ENCODE measurements at regions of chrX and their contacts with region 1.

Region 1: DNA sequence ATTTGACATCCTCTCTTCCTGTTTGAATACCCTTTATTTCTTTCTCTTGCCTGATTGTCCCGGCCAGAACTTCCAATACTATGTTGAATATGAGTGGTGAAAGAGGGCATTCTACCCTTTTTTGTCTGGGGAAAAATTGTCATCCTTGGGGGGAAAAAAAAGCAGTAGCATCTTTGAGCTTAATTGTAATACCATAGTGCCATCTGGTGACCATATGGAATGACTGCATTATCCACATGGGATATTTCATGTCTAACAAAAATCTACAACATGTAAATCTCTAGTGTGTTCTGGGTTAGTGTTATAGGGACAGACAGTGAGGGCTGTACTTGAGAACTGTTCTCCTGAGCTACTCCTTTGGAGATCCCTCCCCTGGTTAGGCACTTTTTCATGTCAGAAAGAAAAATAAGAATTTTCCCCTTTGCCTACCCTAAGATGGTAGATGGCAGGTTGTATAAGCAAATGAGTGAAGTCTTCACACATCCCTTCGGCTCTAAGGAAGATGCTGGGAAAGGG is 26.0 kb downstream of the CAPN6 start:
- DNase-seq: no peak
- H3K4me3 Mint-ChIP-seq: no peak overlapping the region
- H3K27ac Mint-ChIP-seq: no peak overlapping the region
- H3K4me1 Mint-ChIP-seq: no peaks in the 10 kb centered on the region
- H3K27me3 Mint-ChIP-seq: no peaks in the 10 kb centered on the region

Region 2: DNA sequence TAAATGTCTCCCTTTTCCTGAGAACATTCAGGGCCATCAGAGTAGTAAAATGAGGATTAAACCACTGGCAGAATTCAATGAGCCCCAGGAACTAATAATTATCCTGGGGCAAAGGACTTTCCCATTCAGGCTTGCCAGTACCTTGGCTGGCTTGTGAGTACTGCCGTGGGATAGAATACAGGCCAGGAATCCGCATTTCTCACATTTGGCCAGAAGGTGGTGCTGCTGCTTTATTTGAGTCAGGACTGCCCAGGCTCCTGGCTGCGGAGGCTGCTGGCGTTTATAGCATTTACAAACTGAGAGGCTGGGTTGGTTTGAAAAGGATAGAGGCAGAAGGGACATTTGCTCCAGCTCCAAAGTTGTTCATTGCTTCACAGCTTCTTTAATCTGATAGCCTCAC is 794.2 kb before region 1 on chrX:
- intact Hi-C with region 1: loop called (anchors 10 kb)
- DNase-seq: peak; percentile 83
- H3K4me3 Mint-ChIP-seq: no peak overlapping the region
- H3K27ac Mint-ChIP-seq: no peak overlapping the region
- H3K4me1 Mint-ChIP-seq: no peaks in the 10 kb centered on the region
- H3K27me3 Mint-ChIP-seq: peaks cover 4% of the 10 kb centered on the region

Region 3: DNA sequence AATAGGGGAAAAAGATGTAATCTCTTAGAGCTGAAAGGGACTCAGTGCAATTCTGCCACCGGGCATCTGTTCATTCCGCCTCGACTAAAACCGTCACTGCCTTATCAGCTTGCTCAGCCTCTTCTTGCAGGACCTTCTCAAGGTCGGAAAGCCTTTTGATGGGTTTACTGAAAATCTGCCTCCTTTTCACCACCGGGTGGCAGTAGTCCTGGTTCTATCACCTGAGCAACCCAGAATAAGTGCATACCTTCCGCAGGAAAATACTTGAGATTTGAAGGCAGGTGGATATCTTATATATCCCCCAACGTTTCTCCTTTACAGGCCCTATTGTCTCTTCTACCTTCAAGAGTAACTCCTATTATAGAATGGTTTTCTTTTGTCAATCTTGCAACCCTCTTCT is 251.7 kb before region 1 on chrX:
- intact Hi-C with region 1: loop called (anchors 1 kb)
- DNase-seq: peak; percentile 58
- H3K4me3 Mint-ChIP-seq: no peak overlapping the region
- H3K27ac Mint-ChIP-seq: no peak overlapping the region
- H3K4me1 Mint-ChIP-seq: no peaks in the 10 kb centered on the region
- H3K27me3 Mint-ChIP-seq: peaks cover 6% of the 10 kb centered on the region